ENCODE measurements at regions of chr12 and their contacts with region 1.

Region 1: GRCh38 chr12:89461649-89462612 is 62.7 kb downstream of the GALNT4 start:
- H3K4me3 ChIP-seq: no peak overlapping the region
- H3K27ac ChIP-seq: no peak overlapping the region
- H3K4me1 ChIP-seq: peaks cover 7% of the 10 kb centered on the region
- CTCF ChIP-seq: no peak; the same call in 1 of the 2 replicates

Region 2: DNA sequence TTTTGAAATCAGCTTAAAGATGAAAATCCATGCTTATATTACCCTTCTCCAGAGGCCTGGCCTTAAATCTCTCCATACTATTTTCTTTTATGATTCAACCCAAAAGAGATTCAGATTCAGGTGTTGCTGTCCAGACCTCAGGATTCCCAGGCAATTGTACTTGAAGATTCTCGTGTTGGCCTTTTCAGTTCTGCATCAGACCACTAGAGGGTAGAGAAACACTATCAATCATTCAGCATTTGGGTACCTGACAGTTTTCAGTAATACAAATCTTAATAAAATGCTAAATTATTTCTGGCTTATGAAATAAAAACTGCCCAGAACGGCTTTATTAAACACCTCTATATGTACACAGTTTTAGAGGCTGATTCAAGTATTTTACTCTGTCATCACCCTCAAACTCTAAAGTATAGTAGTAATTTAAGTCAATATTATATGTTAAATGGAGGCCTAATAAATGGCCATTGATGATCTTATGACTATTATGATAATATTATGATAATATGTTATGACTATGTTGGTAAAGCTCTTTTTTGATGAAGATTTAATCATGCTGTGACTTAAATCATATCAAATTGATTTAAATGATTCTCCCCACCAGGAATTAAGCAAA is 410.8 kb before region 1 on chr12:
- CTCF ChIA-PET with region 1: interaction called, 22 read pairs
- POLR2A ChIA-PET with region 1: no interaction called
- H3K4me3 ChIP-seq: no peak overlapping the region
- H3K27ac ChIP-seq: no peak overlapping the region
- H3K4me1 ChIP-seq: no peaks in the 10 kb centered on the region
- CTCF ChIP-seq: peak; percentile 37; the same call in 1 of the 2 replicates

Region 3: DNA sequence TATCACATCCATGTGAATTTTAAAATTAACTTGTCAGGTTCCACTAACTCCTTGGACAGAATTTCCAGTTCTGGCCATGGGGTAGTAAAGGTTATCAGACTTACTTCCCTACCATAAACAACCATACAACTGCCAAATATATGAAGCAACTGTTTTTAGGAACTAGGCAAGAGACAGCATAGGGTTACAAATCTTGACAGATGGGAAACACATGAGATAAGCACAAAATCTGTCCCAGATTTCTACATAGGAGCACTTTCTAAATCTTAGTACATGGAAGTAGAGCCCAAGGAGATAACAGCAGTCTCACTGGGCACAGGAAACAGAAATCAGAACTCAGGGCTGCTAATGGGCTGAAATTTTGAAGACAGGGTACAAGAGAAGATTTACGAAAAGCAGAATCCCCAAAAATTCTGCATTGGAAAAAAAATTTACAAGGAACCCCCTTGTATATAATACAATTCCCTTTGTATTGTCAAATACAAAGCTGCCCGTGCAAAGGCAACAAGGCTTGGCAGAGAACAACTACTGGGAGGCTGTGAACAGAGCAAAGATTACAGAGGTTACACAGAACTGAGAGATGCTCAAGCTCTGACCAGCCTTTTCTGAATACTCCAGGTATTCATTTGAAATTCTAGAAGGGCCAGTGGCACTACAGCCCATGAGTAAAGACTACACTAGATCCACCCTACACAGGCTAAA is 19.4 kb after region 1 on chr12:
- CTCF ChIA-PET with region 1: no interaction called
- POLR2A ChIA-PET with region 1: no interaction called
- H3K4me3 ChIP-seq: no peak overlapping the region
- H3K27ac ChIP-seq: no peak overlapping the region
- H3K4me1 ChIP-seq: no peaks in the 10 kb centered on the region
- CTCF ChIP-seq: no peak

Region 4: GRCh38 chr12:89504560-89505346 is 42.8 kb after region 1 on chr12:
- CTCF ChIA-PET with region 1: no interaction called
- POLR2A ChIA-PET with region 1: no interaction called
- H3K4me3 ChIP-seq: no peak overlapping the region
- H3K27ac ChIP-seq: no peak overlapping the region
- H3K4me1 ChIP-seq: no peaks in the 10 kb centered on the region
- CTCF ChIP-seq: no peak

Region 5: GRCh38 chr12:89542912-89543592 is 81.1 kb after region 1 on chr12:
- CTCF ChIA-PET with region 1: no interaction called
- POLR2A ChIA-PET with region 1: no interaction called
- H3K4me3 ChIP-seq: no peak overlapping the region
- H3K27ac ChIP-seq: no peak overlapping the region
- H3K4me1 ChIP-seq: no peaks in the 10 kb centered on the region
- CTCF ChIP-seq: peak; percentile 74

Measured in HEK293 (cell line).